ENCODE measurements at regions of chr9 and their contacts with region 1.

Region 1: GRCh38 chr9:127611899-127612790 is at the start of gene STXBP1:
- DNase-seq: peak; percentile 93
- total RNA-seq, gene STXBP1: 46.6 TPM

Region 2: GRCh38 chr9:127396808-127397497 is 215.2 kb before region 1 on chr9 and contains the start of gene SLC2A8:
- intact Hi-C with region 1: no loop called
- DNase-seq: peak; percentile 99
- total RNA-seq, gene SLC2A8: 14.5 TPM

Region 3: DNA sequence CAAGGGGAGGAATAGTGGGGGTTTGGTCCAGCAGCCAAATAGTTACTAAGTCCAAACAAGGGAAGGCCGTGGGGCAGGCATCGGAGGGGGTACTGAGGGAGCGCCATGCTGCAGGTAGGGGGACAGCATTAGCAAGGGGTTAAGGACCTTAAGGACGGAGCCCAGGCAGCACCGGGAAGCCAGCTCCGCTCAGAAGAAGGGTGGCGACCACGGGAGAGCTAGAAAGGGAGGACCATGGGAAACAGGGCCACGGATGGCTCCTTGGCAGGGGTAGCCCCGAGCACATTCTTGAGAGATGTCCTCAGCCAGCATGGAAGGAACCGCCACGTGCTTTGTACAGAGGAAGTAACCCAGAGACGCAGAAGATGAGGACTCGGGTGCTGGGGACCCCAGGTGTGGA is 76.3 kb before region 1 on chr9:
- intact Hi-C with region 1: no loop called
- DNase-seq: no peak

Region 4: DNA sequence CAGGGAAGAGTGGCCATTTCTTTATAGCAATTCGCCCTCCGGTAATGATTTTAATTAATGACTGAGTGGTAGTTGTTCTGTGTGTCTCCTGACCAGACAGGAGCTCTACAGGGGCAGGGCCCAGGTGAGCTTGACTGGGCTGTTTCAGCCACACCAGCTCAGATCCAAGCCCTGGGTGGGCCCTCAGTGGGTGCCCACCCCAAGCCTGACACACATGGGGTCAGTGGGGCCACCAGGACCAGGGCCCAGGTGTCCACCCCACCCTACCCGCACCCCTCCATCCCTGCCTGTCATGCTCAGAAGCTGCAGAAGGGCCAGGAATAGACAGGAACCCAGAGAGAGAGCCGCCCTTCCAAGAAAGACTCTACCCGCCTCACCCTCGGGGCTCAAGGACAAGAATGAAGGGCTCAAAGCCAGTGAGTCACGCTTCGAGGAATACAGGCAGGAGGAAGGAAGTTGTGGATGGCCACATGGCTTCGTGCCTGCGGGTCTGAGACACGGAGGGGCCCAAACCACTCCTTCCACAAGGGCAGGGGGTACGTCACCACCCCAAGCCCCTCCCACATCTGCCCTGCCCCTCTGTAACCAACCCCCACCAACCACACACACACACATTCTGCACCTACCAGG is 56.3 kb before region 1 on chr9:
- intact Hi-C with region 1: no loop called
- DNase-seq: peak; percentile 82

Region 5: DNA sequence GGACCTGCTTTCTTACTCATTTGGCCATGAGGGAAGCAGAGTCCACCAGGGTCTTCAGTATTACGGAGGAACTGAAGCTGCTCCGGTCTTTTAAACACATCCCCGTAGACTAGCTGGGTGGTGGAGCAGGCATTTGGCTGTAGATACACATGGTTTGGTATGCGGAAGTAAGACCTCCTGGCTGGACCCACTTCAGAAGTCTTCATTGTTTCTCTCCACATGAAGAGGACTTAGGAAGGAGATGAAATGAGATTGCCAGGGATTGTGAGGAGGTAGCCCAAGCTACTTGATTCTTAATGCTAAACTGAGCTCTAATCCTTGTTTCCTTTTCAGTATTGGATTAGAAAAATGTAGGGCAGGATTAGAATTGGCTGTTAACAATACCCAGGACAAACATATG is 32.8 kb after region 1 on chr9:
- intact Hi-C with region 1: loop called (anchors 5 kb)
- DNase-seq: no peak

Region 6: DNA sequence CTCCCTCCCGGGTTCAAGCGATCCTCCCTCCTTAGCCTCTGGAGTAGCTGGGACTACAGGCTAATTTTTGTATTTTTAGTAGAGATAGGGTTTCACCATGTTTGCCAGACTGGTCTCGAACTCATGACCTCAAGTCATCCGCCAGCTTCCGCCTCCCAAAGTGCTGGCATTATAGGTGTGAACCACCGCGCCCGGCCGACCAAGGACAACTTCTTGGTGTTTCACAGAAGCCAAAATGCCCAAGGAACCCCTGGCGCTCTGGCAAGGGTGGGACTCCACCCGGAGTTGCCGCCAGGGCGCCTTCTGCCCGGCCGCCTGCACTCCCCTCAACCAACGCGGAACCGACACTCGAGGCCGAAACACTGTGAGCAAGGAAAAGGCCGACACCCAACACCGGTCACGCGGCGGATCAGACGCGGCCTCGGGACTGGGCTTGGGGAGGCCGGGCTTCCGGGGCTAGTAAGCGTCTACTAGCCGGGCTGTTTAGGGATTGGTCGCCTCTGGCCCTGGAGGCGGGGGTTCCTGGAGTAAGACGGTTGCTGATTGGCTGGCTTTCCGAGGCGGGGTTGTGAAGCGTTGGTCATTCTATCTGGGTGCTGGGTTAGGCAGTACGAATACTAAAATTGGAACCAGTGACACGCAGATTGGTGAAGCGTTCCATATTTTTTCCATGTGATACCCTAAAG is 87.0 kb after region 1 on chr9:
- intact Hi-C with region 1: loop called (anchors 5 kb)
- DNase-seq: peak; percentile 98

Region 7: GRCh38 chr9:127715394-127716337 is 103.5 kb after region 1 on chr9 and contains the starts of genes PTRH1 and TTC16:
- intact Hi-C with region 1: loop called (anchors 5 kb)
- DNase-seq: peak; percentile 99
- total RNA-seq, gene PTRH1: 13.4 TPM
- total RNA-seq, gene TTC16: 0.16 TPM

Region 8: DNA sequence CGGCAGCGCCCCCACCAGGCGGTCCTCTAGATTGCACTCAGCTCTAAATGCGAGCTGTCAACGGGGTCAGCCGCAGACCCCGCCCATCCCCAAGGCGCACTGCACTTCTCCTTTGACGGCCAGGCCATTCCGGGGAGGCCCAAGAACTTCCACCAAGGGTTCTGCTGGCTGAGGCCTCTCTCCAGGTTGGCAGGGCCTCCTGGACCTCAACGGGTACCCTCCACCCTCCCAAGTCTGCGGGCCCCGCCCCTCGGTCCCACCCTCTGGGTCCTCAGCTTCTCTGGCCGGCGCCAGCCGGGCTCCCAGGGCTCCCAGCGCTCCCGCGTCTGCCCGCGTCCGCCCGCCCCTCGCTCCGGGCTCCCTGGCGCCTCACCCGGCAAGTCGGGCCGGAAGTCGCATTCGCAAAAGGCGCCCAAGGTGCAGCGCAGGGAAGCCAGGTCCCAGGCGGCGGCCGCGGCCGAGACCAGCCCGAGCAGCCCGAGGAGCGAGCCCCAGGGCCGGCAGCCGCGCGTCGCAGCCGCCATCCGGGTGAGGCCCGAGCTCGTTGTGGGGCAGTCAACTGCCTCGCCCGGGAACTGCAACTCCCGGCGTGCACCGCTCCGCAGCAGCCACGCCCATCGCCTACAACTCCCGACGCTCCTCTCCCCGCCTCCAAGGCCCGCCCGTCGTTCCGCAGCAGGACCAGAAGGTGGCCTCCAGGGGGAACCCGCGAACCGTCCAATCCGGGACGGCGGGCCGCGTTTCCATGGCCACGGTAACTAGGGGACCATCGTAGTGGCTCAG is 122.8 kb after region 1 on chr9 and contains the start of gene TOR2A:
- intact Hi-C with region 1: loop called (anchors 5 kb)
- DNase-seq: peak; percentile 98
- total RNA-seq, gene TOR2A: 4.4 TPM